Psoas muscle (tissue), 8 donors: ENCODE measurements at regions of chr14 and their contacts with region 1.

Region 1: GRCh38 chr14:36553656-36554260 is 28.7 kb downstream of the NKX2-8 start:
- DNase-seq: no peak
- ATAC-seq: peak; percentile 56 to 77 (median 66)
- H3K4me3 ChIP-seq: no peak overlapping the region
- H3K27ac ChIP-seq: no peak overlapping the region
- H3K4me1 ChIP-seq: no peaks in the 10 kb centered on the region
- H3K27me3 ChIP-seq: no peaks in the 10 kb centered on the region
- CTCF ChIP-seq: peak; percentile 65

Region 2: GRCh38 chr14:35883677-35884293 is 670.0 kb before region 1 on chr14:
- intact Hi-C with region 1: loop called in 1 of 2 experiments (anchors 10 kb)
- DNase-seq: no peak
- ATAC-seq: no peak
- H3K4me3 ChIP-seq: no peak overlapping the region
- H3K27ac ChIP-seq: no peak overlapping the region
- H3K4me1 ChIP-seq: peaks cover 4% of the 10 kb centered on the region
- H3K27me3 ChIP-seq: no peaks in the 10 kb centered on the region
- CTCF ChIP-seq: peak; percentile 41

Region 3: GRCh38 chr14:36517242-36518030 is 36.3 kb before region 1 on chr14:
- intact Hi-C with region 1: no loop called
- DNase-seq: no peak
- ATAC-seq: peak in 3 of 4 donors; percentile 49 to 62 (median 60)
- H3K4me3 ChIP-seq: peak overlapping the region; percentile 55
- H3K27ac ChIP-seq: no peak overlapping the region
- H3K4me1 ChIP-seq: peaks cover 25% of the 10 kb centered on the region
- H3K27me3 ChIP-seq: peaks cover 0 to 100% (median 68%) of the 10 kb centered on the region in 3 donors
- CTCF ChIP-seq: no peak

Region 4: DNA sequence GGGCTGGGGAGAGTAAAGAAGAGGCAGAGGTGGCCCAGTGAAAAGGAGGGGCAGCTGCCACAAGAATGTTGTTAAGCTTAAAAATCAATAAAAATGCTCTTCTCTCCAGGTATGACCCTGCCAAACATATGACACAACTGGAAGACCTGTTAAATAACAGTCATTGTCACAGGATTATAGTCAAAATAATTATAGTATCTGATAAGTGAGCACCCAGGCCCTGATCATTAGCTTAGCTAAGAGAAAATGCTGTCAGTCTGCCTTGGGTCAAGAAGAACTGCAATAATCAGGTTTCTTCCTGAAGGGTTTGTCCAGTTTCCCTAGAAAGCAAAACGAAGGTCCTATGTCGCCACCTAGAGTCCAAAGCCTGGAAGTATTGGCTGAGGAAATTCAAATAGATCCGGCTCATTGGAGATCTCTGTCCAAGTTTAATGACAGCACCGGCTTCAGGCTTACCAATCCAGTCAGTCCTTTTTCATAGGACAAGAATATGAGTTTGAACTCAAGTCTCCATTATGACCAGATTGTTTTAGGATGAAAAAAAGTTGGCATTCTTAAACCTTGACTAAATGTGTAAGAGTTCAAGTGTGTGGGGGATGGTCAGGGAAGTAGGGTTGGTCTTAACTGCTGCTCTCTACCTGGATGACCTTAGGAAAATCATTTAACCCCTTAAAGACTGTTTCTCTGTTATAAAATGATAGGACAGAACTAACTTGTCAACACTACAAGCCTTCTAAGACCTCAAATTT is 51.2 kb after region 1 on chr14:
- intact Hi-C with region 1: loop called in 1 of 2 experiments (anchors 2 kb)
- DNase-seq: no peak
- ATAC-seq: peak in 2 of 4 donors; percentile 51 to 78
- H3K4me3 ChIP-seq: no peak overlapping the region
- H3K27ac ChIP-seq: no peak overlapping the region
- H3K4me1 ChIP-seq: no peaks in the 10 kb centered on the region
- H3K27me3 ChIP-seq: peaks cover 0 to 9% (median 1%) of the 10 kb centered on the region in 3 donors
- CTCF ChIP-seq: peak; percentile 68

Region 5: DNA sequence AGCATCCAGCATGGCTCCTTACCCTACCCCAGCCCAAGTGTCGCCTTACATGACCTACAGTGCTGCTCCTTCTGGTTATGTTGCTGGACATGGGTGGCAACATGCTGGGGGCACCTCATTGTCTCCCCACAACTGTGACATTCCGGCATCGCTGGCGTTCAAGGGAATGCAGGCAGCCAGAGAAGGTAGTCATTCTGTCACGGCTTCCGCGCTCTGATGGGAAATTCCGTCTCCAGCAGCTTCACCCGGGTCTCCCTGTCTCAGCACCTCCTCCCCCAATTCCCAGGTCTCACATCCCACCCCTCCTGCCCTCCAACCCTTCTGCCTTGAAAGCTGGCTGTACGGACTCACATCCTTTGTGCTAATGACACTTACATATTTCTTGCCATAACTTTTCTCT is 122.5 kb after region 1 on chr14:
- intact Hi-C with region 1: no loop called
- DNase-seq: no peak
- ATAC-seq: no peak
- H3K4me3 ChIP-seq: no peak overlapping the region
- H3K27ac ChIP-seq: no peak overlapping the region
- H3K4me1 ChIP-seq: no peaks in the 10 kb centered on the region
- H3K27me3 ChIP-seq: peaks cover 0 to 20% (median 3%) of the 10 kb centered on the region in 3 donors
- CTCF ChIP-seq: no peak

Region 6: DNA sequence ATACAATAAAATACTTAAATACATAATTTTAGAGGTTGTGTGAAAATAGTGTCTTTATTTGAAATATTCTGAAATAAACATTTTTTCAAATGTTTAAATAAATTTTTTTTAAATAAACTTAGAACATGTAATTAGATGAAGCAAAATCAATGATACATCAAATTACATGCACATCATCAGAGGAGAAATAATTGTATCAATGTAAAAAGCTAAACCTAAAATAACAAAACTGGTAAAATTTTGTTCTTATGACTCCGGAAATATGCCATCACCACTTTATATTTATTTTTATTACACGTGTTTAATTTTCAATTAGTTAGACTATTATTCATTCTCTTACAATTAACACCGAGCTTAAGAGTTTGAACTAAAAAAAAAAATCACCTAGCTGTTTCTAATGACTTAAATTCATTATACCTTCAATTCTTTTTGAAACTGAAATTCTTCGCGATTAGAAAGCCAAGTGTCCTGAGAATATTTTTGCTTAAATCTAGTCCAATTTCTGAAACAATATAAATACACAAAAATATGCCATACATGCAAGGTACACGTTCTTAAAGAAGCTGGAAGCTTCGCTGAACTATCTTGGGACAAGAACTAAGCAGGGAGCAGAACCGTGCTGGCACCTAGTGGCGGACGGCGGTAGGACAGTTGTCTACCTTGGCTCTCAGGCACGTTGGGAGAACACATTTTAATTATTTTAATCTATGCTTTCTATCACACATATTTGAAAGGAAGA is 388.2 kb after region 1 on chr14:
- intact Hi-C with region 1: loop called (anchors 5 to 10 kb)
- DNase-seq: peak; percentile 70 to 81
- ATAC-seq: peak; percentile 80 to 94 (median 81)
- H3K4me3 ChIP-seq: no peak overlapping the region
- H3K27ac ChIP-seq: no peak overlapping the region
- H3K4me1 ChIP-seq: no peaks in the 10 kb centered on the region
- H3K27me3 ChIP-seq: peaks cover 0 to 8% (median 0%) of the 10 kb centered on the region in 3 donors
- CTCF ChIP-seq: peak; percentile 97